K562 (cell line): ENCODE measurements at regions of chr1 and their contacts with region 1.

Region 1: DNA sequence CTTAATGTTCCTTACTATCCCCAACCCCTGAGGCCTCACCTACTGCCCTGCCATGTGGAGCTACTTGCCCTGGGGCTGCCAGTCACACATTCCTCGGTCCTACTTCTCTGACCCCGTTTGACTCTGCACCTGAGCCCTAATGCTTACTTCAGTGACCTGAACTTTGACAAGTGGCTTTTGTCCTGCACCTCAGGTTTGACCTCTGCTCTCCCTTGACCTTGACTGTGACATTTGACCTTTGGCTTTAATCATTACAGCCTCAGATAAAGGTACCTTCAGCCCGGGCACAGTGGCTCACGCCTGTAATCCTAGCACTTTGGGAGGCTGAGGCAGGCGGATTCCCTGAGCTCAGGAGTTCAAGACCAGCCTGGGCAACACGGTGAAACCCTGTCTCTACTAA is 22.8 kb downstream of the MR1 start:
- DNase-seq: no peak
- ATAC-seq: no peak
- H3K4me3 ChIP-seq: no peak overlapping the region
- H3K27ac ChIP-seq: no peak overlapping the region
- H3K4me1 ChIP-seq: no peaks in the 10 kb centered on the region
- H3K27me3 ChIP-seq: peaks cover 0 to 12% of the 10 kb centered on the region in 2 experiments; a peak in 1 of 5 replicates
- CTCF ChIP-seq: no peak
- EP300 ChIP-seq: no peak
- POLR2A ChIP-seq: no peak
- RAD21 ChIP-seq: no peak

Region 2: GRCh38 chr1:180954005-180954800 is 102.4 kb before region 1 on chr1:
- CTCF ChIA-PET with region 1: no interaction called
- POLR2A ChIA-PET with region 1: no interaction called
- in situ Hi-C with region 1: no loop called
- intact Hi-C with region 1: no loop called
- DNase-seq: peak in 1 of 4 experiments; percentile 6
- ATAC-seq: no peak
- H3K4me3 ChIP-seq: no peak overlapping the region
- H3K27ac ChIP-seq: no peak overlapping the region
- H3K4me1 ChIP-seq: peaks cover 0 to 20% of the 10 kb centered on the region in 2 experiments; a peak in 3 of 5 replicates
- H3K27me3 ChIP-seq: no peaks in the 10 kb centered on the region
- CTCF ChIP-seq: no peak
- EP300 ChIP-seq: no peak
- POLR2A ChIP-seq: no peak
- RAD21 ChIP-seq: no peak

Region 3: DNA sequence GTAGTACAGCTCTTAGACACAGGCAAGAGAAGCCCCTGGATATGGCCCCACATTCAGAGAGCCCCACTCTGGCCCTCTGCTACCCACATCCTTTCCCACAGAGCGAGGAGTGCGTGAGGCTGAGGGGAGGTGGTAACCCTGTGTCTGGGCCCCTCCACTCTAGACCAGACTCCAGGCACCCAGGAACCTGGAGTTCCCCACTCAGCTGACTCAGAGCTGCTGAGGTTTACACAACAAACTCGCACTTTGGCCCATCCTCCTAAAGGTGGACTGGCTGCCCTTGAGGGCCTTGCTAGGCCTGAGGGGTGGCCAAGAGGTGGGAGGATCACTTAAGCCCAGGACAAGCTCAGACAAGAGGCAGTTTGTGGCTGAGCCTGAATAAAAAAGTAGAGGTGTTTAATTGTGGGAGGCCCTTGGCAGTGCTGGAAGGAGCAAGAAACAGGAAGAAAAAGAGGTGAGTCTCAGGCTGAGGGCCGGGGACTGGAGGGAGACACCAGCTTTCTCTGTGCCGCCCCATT is 12.1 kb before region 1 on chr1:
- CTCF ChIA-PET with region 1: no interaction called
- POLR2A ChIA-PET with region 1: interaction called, 15 read pairs
- in situ Hi-C with region 1: no loop called
- intact Hi-C with region 1: no loop called
- DNase-seq: no peak
- ATAC-seq: peak; percentile 35
- H3K4me3 ChIP-seq: no peak overlapping the region
- H3K27ac ChIP-seq: no peak overlapping the region; the same call in 2 of the 3 replicates
- H3K4me1 ChIP-seq: peaks cover 0 to 10% of the 10 kb centered on the region in 2 experiments; a peak in 3 of 5 replicates
- H3K27me3 ChIP-seq: no peaks in the 10 kb centered on the region
- CTCF ChIP-seq: no peak
- EP300 ChIP-seq: no peak
- POLR2A ChIP-seq: no peak
- RAD21 ChIP-seq: no peak

Region 4: GRCh38 chr1:181152892-181153633 is 96.5 kb after region 1 on chr1:
- CTCF ChIA-PET with region 1: no interaction called
- POLR2A ChIA-PET with region 1: no interaction called
- in situ Hi-C with region 1: no loop called
- intact Hi-C with region 1: no loop called
- DNase-seq: peak; percentile 90 to 99 (median 94)
- ATAC-seq: peak; percentile 98
- H3K4me3 ChIP-seq: no peak overlapping the region
- H3K27ac ChIP-seq: peak overlapping the region; percentile 65
- H3K4me1 ChIP-seq: peaks cover 27 to 31% of the 10 kb centered on the region in 2 experiments
- H3K27me3 ChIP-seq: no peaks in the 10 kb centered on the region
- CTCF ChIP-seq: peak; percentile 71 to 86 (median 80)
- EP300 ChIP-seq: peak; percentile 99
- POLR2A ChIP-seq: no peak
- RAD21 ChIP-seq: peak; percentile 78 to 79